MCF 10A (cell line): ENCODE measurements at regions of chr6 and their contacts with region 1.

Region 1: GRCh38 chr6:108558372-108559096 is 2.2 kb upstream of the FOXO3 start:
- DNase-seq: peak; percentile 97
- H3K4me3 Mint-ChIP-seq: peak overlapping the region; percentile 90
- H3K27ac Mint-ChIP-seq: peak overlapping the region; percentile 91
- H3K4me1 Mint-ChIP-seq: peaks cover 28% of the 10 kb centered on the region
- H3K27me3 Mint-ChIP-seq: no peaks in the 10 kb centered on the region
- CTCF ChIP-seq: no peak

Region 2: GRCh38 chr6:108115598-108116058 is 442.9 kb before region 1 on chr6:
- CTCF ChIA-PET with region 1: no interaction called
- POLR2A ChIA-PET with region 1: no interaction called
- intact Hi-C with region 1: no loop called
- DNase-seq: peak; percentile 63
- H3K4me3 Mint-ChIP-seq: peak overlapping the region; percentile 73
- H3K27ac Mint-ChIP-seq: no peak overlapping the region
- H3K4me1 Mint-ChIP-seq: peaks cover 24% of the 10 kb centered on the region
- H3K27me3 Mint-ChIP-seq: peaks cover 11% of the 10 kb centered on the region
- CTCF ChIP-seq: peak; percentile 29

Region 3: DNA sequence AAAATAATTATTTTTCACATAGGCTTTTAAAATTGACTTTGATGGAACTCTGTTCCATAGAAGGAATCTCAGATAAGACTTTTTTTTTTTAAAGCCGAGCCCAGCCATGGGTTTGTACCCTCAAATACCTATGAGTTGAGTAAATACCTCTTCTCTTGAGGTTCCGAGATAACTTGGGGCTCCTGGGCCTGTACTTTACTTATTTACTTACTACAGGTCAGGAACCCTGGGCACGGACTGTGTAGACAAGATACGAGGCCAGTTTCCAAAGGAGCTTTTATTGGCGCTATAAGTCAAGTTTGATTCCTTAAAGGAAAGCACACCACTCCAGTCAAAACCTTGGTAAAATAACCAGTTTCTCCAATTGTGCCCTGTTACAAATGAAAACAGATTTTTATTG is 256.1 kb before region 1 on chr6:
- CTCF ChIA-PET with region 1: no interaction called
- POLR2A ChIA-PET with region 1: no interaction called
- intact Hi-C with region 1: no loop called
- DNase-seq: no peak
- H3K4me3 Mint-ChIP-seq: no peak overlapping the region
- H3K27ac Mint-ChIP-seq: no peak overlapping the region
- H3K4me1 Mint-ChIP-seq: peaks cover 16% of the 10 kb centered on the region
- H3K27me3 Mint-ChIP-seq: no peaks in the 10 kb centered on the region
- CTCF ChIP-seq: no peak

Region 4: GRCh38 chr6:108541838-108542759 is 16.4 kb before region 1 on chr6:
- CTCF ChIA-PET with region 1: interaction called, 25 read pairs
- POLR2A ChIA-PET with region 1: interaction called, 31 read pairs
- intact Hi-C with region 1: no loop called
- DNase-seq: peak; percentile 81
- H3K4me3 Mint-ChIP-seq: no peak overlapping the region
- H3K27ac Mint-ChIP-seq: no peak overlapping the region
- H3K4me1 Mint-ChIP-seq: peaks cover 6% of the 10 kb centered on the region
- H3K27me3 Mint-ChIP-seq: no peaks in the 10 kb centered on the region
- CTCF ChIP-seq: peak; percentile 88

Region 5: GRCh38 chr6:108598305-108598863 is 39.9 kb after region 1 on chr6:
- CTCF ChIA-PET with region 1: interaction called, 4 read pairs
- POLR2A ChIA-PET with region 1: interaction called, 164 read pairs
- intact Hi-C with region 1: no loop called
- DNase-seq: no peak
- H3K4me3 Mint-ChIP-seq: peak overlapping the region; percentile 29
- H3K27ac Mint-ChIP-seq: peak overlapping the region; percentile 64
- H3K4me1 Mint-ChIP-seq: peaks cover 42% of the 10 kb centered on the region
- H3K27me3 Mint-ChIP-seq: no peaks in the 10 kb centered on the region
- CTCF ChIP-seq: no peak

Region 6: DNA sequence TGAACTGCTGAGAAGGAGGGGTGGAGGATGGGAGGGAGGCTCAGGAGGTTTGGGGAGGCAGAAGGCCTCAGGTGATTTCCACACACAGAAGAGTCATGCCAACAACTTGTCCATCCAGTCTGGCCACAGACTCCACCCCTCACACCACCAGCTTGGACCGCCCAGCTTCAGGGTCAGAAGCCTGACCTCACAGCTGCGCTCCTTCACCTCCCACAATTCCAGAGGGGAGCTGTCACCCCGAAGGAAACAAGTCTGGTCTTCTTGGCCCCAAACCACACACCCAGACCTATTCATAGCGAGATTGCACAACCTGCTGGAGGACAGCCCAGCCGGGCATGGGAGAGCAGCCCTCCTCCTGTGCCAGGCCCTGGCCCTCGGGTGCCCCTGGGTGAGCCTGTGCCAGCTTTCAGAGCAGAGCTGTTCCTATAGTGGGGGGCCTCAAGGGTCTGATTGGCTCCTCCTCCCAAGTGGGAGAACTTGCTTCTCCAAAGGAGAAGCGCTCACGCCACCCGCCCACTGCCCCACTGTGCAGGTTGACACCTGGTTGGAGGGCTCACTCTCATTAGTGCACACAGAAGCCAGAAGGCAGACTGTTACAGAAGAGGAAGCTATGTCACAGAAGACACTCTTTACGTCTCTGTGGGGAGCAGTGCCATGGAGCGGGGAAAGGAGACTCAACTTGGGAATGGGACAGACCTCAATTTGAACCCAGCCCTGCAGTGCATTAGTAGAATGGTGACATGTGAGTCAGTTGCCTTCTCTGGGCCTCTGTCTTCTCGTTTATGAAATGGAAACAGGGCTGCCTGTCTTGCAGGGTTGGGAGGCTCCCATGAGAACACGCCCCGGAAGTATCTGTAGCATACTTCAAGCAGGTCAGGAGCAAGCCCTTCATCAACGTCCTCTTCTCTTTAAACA is 131.0 kb after region 1 on chr6:
- CTCF ChIA-PET with region 1: interaction called, 3 read pairs
- POLR2A ChIA-PET with region 1: interaction called, 19 read pairs
- intact Hi-C with region 1: loop called (anchors 1 kb)
- DNase-seq: peak; percentile 100
- H3K4me3 Mint-ChIP-seq: peak overlapping the region; percentile 32
- H3K27ac Mint-ChIP-seq: peak overlapping the region; percentile 73
- H3K4me1 Mint-ChIP-seq: peaks cover 51% of the 10 kb centered on the region
- H3K27me3 Mint-ChIP-seq: no peaks in the 10 kb centered on the region
- CTCF ChIP-seq: no peak

Region 7: DNA sequence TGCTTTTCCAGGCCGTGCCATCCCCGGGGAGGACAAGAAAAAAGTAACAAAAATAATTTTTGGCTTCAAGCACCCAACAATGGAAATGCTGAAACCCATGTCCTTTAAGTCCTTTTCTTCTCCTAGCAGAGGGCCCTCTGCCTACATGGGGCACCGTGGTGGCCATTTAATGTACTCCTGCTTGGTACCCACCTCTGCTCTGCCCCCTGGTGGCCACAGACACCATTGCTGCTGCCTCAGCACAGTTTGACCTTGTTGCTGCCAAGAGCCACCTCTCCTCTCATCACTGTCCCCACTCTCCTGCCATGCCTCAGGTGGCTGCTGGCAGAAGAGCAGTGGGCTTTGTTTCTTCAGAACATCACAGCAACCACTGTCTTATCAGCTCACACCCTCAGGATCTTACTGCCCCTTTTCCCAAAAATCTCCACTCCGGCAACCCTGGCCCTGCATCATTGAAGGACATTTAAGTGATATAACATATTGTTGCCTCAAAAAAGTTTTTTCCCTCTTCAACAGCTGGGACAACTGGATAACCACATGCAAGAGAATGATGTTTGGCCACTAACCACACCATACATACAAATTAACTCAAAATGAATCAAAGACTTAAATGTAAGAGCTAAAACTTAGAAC is 276.8 kb after region 1 on chr6:
- CTCF ChIA-PET with region 1: interaction called, 4 read pairs
- POLR2A ChIA-PET with region 1: interaction called, 21 read pairs
- intact Hi-C with region 1: loop called (anchors 1 kb)
- DNase-seq: peak; percentile 78
- H3K4me3 Mint-ChIP-seq: no peak overlapping the region
- H3K27ac Mint-ChIP-seq: no peak overlapping the region
- H3K4me1 Mint-ChIP-seq: peaks cover 34% of the 10 kb centered on the region
- H3K27me3 Mint-ChIP-seq: no peaks in the 10 kb centered on the region
- CTCF ChIP-seq: peak; percentile 94

Region 8: GRCh38 chr6:109009236-109009961 is 450.9 kb after region 1 on chr6:
- CTCF ChIA-PET with region 1: interaction called, 4 read pairs
- POLR2A ChIA-PET with region 1: interaction called, 43 read pairs
- intact Hi-C with region 1: loop called (anchors 2 kb)
- DNase-seq: peak; percentile 89
- H3K4me3 Mint-ChIP-seq: peak overlapping the region; percentile 93
- H3K27ac Mint-ChIP-seq: peak overlapping the region; percentile 94
- H3K4me1 Mint-ChIP-seq: peaks cover 24% of the 10 kb centered on the region
- H3K27me3 Mint-ChIP-seq: no peaks in the 10 kb centered on the region
- CTCF ChIP-seq: no peak

Region 9: DNA sequence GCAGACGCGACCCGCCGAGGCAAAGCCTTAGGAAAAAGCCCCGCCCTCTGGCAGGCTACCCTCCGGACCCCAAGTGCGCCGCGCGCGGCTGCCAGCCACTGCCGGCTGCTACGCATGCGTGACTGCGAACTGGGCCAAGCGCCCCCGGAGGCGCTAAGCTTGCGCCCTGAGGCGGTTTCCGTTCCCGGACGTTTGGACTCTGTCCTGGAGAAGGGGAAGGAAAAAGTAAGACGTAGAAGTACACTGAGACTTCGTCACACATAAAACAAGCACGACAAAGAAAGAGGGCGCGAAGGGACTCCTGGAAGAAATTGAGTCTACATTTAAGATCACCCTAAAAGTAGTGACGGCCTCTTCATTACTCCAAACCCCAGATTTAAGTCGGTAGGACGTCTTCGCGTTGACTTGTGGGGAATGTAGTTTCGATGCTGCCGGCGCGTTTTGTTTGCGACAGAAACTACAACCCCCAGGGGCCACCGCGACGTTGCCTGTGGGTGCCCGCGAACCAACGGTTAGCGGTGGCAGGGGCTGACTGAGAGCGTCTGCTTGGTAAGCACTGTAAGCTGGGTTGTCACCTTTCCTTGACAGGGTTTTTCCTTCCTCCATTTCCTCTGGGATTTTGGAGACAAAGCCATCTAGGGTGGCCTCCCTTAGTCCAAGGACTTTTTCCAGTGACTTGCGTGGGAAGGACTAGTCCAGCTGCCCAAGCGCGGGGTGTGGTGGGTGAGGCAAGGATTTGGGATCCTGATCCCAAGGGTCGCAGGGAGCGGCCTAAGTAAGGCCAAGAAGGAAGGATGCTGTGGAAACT is 536.7 kb after region 1 on chr6 and contains the start of gene CEP57L1:
- CTCF ChIA-PET with region 1: interaction called, 3 read pairs
- POLR2A ChIA-PET with region 1: interaction called, 59 read pairs
- intact Hi-C with region 1: no loop called
- DNase-seq: peak; percentile 96
- H3K4me3 Mint-ChIP-seq: peak within 1 kb of the TSS; percentile 92
- H3K27ac Mint-ChIP-seq: peak within 1 kb of the TSS; percentile 98
- H3K4me1 Mint-ChIP-seq: peaks cover 36% of the 10 kb centered on the region
- H3K27me3 Mint-ChIP-seq: no peaks in the 10 kb centered on the region
- CTCF ChIP-seq: no peak
- total RNA-seq, gene CEP57L1: 16.7 and 18.9 TPM in 2 replicates